ENCODE measurements at regions of chr10 and their contacts with region 1.

Region 1: DNA sequence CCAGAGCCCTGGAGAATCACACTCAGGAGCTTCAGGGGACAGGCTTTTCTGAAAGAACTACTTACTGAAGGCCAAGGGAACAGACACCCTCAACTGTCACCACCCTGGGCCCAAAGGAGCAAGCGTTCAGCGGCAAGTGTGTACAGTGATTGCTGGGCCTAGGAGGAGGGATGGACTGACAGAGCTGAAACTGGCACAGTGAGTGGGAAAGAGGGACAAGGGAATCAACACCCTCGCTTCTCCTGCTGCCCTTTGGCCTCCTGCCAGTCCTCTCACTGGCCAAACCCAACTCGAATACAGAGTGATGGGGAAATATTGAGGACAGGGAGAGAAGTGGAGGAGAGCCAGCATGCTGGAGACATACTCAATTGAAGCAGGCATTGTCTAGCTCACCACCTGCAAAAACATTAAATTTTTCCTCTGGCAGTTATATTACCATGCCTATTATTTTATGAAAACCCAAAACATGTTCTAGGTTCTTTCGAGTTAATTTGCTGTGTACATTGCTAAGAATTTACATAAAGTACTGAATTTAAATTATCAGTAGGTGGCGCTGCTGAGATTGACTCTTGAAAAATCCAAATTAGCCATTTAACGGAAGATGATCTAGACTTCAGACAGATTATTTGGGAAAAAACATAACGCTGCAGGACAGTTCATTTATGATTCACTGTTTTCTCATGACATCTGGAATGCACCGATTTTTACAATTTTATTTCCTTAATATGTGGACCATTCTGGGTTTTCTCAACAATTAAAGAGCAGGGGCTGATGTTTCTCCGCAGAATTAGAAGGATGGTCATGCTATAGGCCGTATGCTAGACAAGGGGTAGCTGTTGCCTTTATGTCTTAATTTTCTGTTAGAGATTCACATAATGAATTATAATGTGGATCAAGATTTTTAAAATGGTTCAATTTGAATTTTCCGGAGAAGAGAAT is 14.7 kb upstream of the TMEM236 start:
- DNase-seq: no peak
- H3K4me3 ChIP-seq: no peak overlapping the region
- CTCF ChIP-seq: peak in 1 of 3 donors; percentile 19
- POLR2A ChIP-seq: no peak

Region 2: GRCh38 chr10:17607603-17608332 is 129.5 kb before region 1 on chr10:
- intact Hi-C with region 1: loop called (anchors 10 kb)
- DNase-seq: no peak
- H3K4me3 ChIP-seq: no peak overlapping the region
- CTCF ChIP-seq: no peak
- POLR2A ChIP-seq: no peak

Measured in lower leg skin (tissue), 4 donors.